Caco-2 (cell line): ENCODE measurements at regions of chr14 and their contacts with region 1.

Region 1: DNA sequence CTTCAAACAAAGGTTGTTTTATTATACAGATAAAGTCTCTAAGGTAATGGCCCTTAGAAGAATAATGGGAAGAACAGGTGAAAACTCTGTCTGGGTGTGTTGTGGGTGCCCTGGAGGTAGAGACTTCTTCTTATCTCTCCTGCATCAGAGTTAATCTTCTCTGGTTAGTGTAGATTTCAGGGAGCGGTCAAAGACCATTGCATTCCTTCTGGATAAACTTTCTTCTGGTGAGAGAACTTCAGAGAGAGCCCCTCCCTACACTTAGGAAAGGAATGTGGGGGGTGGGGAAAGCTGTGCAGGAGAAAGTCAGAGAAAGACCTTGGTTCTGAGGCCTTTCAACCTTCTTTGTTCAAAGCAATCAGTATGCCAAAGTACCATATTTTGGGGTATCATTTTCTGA is 658.5 kb downstream of the DIO2 start:
- DNase-seq: peak; percentile 91 to 92
- H3K4me3 ChIP-seq: no peak overlapping the region
- H3K4me3 Mint-ChIP-seq: peak overlapping the region; percentile 62
- H3K27ac Mint-ChIP-seq: peak overlapping the region; percentile 90
- H3K4me1 ChIP-seq: peaks cover 63% of the 10 kb centered on the region
- H3K4me1 Mint-ChIP-seq: peaks cover 49% of the 10 kb centered on the region
- H3K27me3 ChIP-seq: no peaks in the 10 kb centered on the region
- H3K27me3 Mint-ChIP-seq: no peaks in the 10 kb centered on the region
- CTCF ChIP-seq: no peak

Region 2: DNA sequence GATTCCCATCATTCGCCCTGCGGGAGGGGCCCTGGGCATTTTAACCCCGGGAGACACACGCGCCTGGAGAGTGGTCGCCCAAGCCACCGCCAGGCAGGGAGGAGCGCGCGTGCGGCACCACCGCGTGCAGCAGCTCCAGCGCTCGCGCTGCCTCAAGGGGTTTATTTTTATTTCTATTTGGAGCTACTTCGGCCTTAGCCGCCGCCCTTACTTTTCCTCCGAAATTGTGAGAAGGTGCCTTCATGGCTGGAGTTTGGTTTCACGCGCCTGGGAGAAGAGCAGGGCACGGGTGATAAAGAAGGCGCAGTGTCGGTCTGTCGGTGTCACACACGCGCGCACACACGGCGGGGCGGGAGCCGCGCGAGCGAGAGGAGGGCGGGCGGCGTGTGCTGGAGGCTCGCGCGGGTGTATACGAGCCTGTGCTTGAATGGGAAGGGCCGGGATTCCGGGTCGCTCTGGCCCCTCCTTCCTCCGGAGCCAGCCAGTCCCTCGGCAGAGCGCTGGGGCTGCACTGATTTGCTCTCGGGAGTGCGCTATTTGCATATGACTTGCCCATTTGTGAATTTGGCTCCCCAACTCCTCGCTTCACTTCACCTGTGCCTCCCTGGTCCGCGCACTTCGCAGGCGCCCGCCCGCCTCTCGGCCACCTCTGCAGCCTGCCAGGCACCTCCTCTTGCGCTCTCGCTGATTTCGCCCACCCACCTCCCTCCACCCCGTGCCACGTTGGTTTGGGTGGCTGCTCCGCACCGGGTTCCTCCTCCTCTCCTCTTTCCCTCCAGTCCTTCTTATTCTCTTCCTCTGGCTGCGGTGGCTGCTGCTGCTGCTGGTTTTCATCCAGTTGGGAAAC is 273.8 kb before region 1 on chr14:
- CTCF ChIA-PET with region 1: no interaction called
- POLR2A ChIA-PET with region 1: no interaction called
- intact Hi-C with region 1: loop called (anchors 2 kb)
- DNase-seq: peak; percentile 93 to 95
- H3K4me3 ChIP-seq: peak overlapping the region; percentile 75
- H3K4me3 Mint-ChIP-seq: peak overlapping the region; percentile 95
- H3K27ac Mint-ChIP-seq: peak overlapping the region; percentile 78
- H3K4me1 ChIP-seq: peaks cover 11% of the 10 kb centered on the region
- H3K4me1 Mint-ChIP-seq: peaks cover 28% of the 10 kb centered on the region
- H3K27me3 ChIP-seq: no peaks in the 10 kb centered on the region
- H3K27me3 Mint-ChIP-seq: peaks cover 4% of the 10 kb centered on the region
- CTCF ChIP-seq: no peak

Region 3: DNA sequence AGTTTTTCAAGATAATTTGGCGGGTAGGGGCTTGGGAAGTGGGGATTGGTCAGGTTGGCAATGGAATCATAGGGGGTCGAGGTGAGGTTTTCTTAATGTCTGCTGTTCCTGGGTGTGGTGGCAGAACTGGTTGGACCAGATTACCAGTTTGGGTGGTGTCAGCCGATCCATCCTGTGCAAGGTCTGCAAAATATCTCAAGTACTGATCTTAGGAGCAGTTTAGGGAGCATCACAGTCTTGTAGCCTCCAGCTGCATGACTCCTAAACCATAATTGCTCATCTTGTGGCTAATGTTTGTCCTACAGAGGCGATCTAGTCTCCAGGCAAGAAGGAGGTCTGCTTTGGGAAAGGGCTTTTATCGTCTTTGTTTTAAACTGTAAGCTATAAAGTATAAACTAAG is 209.8 kb before region 1 on chr14:
- CTCF ChIA-PET with region 1: no interaction called
- POLR2A ChIA-PET with region 1: no interaction called
- intact Hi-C with region 1: loop called (anchors 1 kb)
- DNase-seq: peak; percentile 33 to 43
- H3K4me3 ChIP-seq: no peak overlapping the region
- H3K4me3 Mint-ChIP-seq: peak overlapping the region; percentile 8
- H3K27ac Mint-ChIP-seq: no peak overlapping the region
- H3K4me1 ChIP-seq: peaks cover 49% of the 10 kb centered on the region
- H3K4me1 Mint-ChIP-seq: peaks cover 39% of the 10 kb centered on the region
- H3K27me3 ChIP-seq: no peaks in the 10 kb centered on the region
- H3K27me3 Mint-ChIP-seq: no peaks in the 10 kb centered on the region
- CTCF ChIP-seq: no peak

Region 4: GRCh38 chr14:79496701-79497100 is 56.1 kb before region 1 on chr14:
- CTCF ChIA-PET with region 1: no interaction called
- POLR2A ChIA-PET with region 1: no interaction called
- intact Hi-C with region 1: no loop called
- DNase-seq: no peak
- H3K4me3 ChIP-seq: no peak overlapping the region
- H3K4me3 Mint-ChIP-seq: no peak overlapping the region
- H3K27ac Mint-ChIP-seq: no peak overlapping the region
- H3K4me1 ChIP-seq: no peaks in the 10 kb centered on the region
- H3K4me1 Mint-ChIP-seq: peaks cover 7% of the 10 kb centered on the region
- H3K27me3 ChIP-seq: no peaks in the 10 kb centered on the region
- H3K27me3 Mint-ChIP-seq: no peaks in the 10 kb centered on the region
- CTCF ChIP-seq: no peak

Region 5: GRCh38 chr14:79528828-79529416 is 23.9 kb before region 1 on chr14:
- CTCF ChIA-PET with region 1: no interaction called
- POLR2A ChIA-PET with region 1: no interaction called
- intact Hi-C with region 1: no loop called
- DNase-seq: no peak
- H3K4me3 ChIP-seq: no peak overlapping the region
- H3K4me3 Mint-ChIP-seq: no peak overlapping the region
- H3K27ac Mint-ChIP-seq: no peak overlapping the region
- H3K4me1 ChIP-seq: no peaks in the 10 kb centered on the region; the same call in 1 of the 2 replicates
- H3K4me1 Mint-ChIP-seq: peaks cover 17% of the 10 kb centered on the region
- H3K27me3 ChIP-seq: no peaks in the 10 kb centered on the region
- H3K27me3 Mint-ChIP-seq: no peaks in the 10 kb centered on the region
- CTCF ChIP-seq: no peak

Region 6: GRCh38 chr14:79542121-79542520 is 10.7 kb before region 1 on chr14:
- CTCF ChIA-PET with region 1: no interaction called
- POLR2A ChIA-PET with region 1: no interaction called
- intact Hi-C with region 1: loop called (anchors 1 kb)
- DNase-seq: peak in 1 of 2 experiments; percentile 19
- H3K4me3 ChIP-seq: no peak overlapping the region
- H3K4me3 Mint-ChIP-seq: no peak overlapping the region
- H3K27ac Mint-ChIP-seq: peak overlapping the region; percentile 85
- H3K4me1 ChIP-seq: peaks cover 37% of the 10 kb centered on the region
- H3K4me1 Mint-ChIP-seq: peaks cover 37% of the 10 kb centered on the region
- H3K27me3 ChIP-seq: no peaks in the 10 kb centered on the region
- H3K27me3 Mint-ChIP-seq: no peaks in the 10 kb centered on the region
- CTCF ChIP-seq: no peak

Region 7: GRCh38 chr14:79596531-79596930 is 43.8 kb after region 1 on chr14:
- CTCF ChIA-PET with region 1: interaction called, 3 read pairs
- POLR2A ChIA-PET with region 1: interaction called, 4 read pairs
- intact Hi-C with region 1: loop called (anchors 1 kb)
- DNase-seq: peak; percentile 67 to 73
- H3K4me3 ChIP-seq: no peak overlapping the region
- H3K4me3 Mint-ChIP-seq: no peak overlapping the region
- H3K27ac Mint-ChIP-seq: peak overlapping the region; percentile 68
- H3K4me1 ChIP-seq: peaks cover 30% of the 10 kb centered on the region
- H3K4me1 Mint-ChIP-seq: peaks cover 8% of the 10 kb centered on the region
- H3K27me3 ChIP-seq: no peaks in the 10 kb centered on the region
- H3K27me3 Mint-ChIP-seq: no peaks in the 10 kb centered on the region
- CTCF ChIP-seq: no peak

Region 8: DNA sequence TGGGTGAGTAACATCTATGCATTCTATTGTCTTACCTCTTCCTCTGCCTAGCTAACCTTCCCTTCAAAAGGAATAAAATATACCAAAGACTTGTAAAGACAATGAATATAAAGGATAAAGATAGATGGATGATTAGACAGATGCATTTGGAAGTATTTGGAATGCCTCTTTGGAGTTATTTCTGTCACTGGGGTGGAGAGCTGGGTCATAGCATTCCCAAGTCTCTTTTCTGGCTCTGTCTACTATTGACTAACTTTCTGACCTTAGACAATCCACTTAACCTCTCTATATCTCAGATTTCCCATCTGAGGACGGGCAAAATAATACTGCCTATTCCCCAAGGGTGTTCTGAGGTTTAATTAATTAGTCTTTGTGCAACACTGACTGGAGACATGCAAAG is 141.2 kb after region 1 on chr14:
- CTCF ChIA-PET with region 1: no interaction called
- POLR2A ChIA-PET with region 1: no interaction called
- intact Hi-C with region 1: no loop called
- DNase-seq: no peak
- H3K4me3 ChIP-seq: no peak overlapping the region
- H3K4me3 Mint-ChIP-seq: no peak overlapping the region
- H3K27ac Mint-ChIP-seq: no peak overlapping the region
- H3K4me1 ChIP-seq: no peaks in the 10 kb centered on the region
- H3K4me1 Mint-ChIP-seq: no peaks in the 10 kb centered on the region
- H3K27me3 ChIP-seq: no peaks in the 10 kb centered on the region
- H3K27me3 Mint-ChIP-seq: no peaks in the 10 kb centered on the region
- CTCF ChIP-seq: no peak